ENCODE measurements at regions of chr3 and their contacts with region 1.

Region 1: DNA sequence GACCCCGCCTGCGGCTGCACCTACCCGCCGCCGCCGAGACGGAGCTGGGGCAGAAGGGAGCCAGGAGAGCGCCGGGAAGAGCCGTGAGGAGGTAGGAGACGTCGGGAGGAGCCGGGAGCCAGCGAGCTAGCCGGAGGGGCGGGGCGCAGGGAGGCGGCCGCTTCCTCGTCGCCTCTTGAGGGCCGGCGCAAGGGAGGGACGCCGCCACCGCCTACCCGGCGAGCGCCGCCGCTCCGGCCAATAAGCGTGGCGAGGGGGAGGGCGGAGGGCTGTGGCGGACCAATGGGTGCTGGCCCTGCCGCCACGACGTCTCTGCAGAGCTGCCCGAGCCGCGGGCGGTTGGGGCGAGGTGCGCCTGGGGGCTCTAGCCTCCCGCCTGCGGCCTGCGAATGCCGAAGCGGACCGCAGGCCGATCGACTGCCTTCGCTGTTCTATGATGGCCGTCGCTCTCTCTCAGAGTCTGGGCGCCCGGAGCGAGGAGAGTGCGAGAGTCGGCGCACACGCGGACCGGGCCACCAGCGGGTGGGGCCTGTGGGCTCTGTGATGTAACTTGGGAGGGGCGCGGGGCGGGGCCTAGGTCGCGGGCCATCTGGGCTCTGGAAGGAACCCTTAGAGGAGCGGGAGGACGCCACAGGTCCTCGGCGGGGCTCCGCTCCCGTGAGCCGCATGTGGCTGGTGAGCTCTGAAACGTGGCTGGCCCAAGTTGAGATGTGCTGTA is 72.7 kb upstream of the MAP4 start:
- DNase-seq: peak; percentile 96
- ATAC-seq: peak; percentile 97
- H3K4me3 Mint-ChIP-seq: peak overlapping the region; percentile 98
- H3K27ac Mint-ChIP-seq: peak overlapping the region; percentile 98
- H3K4me1 Mint-ChIP-seq: peaks cover 22% of the 10 kb centered on the region
- H3K27me3 Mint-ChIP-seq: no peaks in the 10 kb centered on the region

Region 2: DNA sequence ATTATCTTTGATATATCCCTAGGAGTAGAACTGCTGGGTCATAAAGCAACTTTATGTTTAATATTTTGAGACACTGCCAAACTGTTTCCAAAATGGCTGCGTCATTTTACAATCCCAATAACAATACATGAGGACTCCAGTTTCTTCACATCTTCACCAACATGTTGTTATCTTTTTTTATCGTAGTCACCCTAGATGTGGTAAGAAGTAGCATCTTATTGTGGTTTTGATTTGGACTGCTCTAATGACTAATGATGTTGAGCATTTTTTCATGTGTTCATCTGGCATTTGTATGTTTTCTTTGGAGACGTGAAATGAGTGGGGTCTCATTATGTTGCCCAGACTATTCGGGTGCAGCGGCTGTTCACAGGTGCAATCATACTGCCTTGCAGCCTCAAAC is 156.5 kb before region 1 on chr3:
- POLR2A ChIA-PET with region 1: no interaction called
- DNase-seq: no peak
- ATAC-seq: no peak
- H3K4me3 Mint-ChIP-seq: no peak overlapping the region
- H3K27ac Mint-ChIP-seq: no peak overlapping the region
- H3K4me1 Mint-ChIP-seq: peaks cover 2% of the 10 kb centered on the region
- H3K27me3 Mint-ChIP-seq: no peaks in the 10 kb centered on the region

Region 3: DNA sequence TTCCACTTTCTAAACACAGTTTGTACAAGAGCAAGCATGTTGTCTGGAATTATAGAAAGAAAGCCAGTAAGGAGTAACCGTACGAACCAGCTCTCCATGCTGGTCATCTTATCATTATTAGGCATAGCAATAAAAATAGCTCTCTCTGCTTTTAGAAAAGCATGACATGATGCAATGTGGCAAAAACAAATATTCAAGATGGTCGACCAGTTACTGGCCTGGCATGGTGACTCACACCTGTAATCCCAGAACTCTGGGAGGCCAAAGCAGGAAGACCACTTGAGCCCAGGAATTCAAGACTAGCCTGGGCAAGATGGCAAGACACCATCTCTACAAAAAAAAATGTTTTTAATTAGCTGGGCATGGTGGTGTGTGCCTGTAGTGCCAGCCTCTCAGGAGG is 70.1 kb before region 1 on chr3:
- POLR2A ChIA-PET with region 1: no interaction called
- DNase-seq: no peak
- ATAC-seq: no peak
- H3K4me3 Mint-ChIP-seq: no peak overlapping the region
- H3K27ac Mint-ChIP-seq: no peak overlapping the region
- H3K4me1 Mint-ChIP-seq: peaks cover 30% of the 10 kb centered on the region
- H3K27me3 Mint-ChIP-seq: no peaks in the 10 kb centered on the region

Region 4: DNA sequence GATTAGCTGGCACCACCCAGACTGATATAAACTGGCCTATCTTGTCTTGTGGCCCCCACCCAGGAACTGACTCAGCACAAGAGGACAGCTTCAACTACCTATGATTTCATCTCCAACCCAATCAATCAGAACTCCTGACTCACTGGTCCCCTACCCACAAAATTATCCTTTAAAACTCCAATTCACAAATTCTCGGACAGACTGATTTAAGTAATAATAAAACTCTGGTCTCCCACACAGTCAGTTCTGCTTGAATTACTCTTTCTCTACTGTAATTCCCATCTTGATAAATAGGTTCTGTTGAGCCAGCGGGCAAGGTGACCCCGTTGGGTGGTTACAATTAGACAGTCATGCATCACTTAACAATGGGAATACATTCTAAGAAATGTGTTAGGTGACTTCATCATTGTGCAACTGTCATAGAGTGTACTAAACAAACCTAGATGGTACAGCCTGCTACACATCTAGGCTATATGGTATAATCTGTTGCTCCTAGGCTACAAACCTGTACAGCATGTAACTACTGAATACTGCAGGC is 24.5 kb before region 1 on chr3:
- POLR2A ChIA-PET with region 1: no interaction called
- DNase-seq: no peak
- ATAC-seq: no peak
- H3K4me3 Mint-ChIP-seq: no peak overlapping the region
- H3K27ac Mint-ChIP-seq: no peak overlapping the region
- H3K4me1 Mint-ChIP-seq: peaks cover 13% of the 10 kb centered on the region
- H3K27me3 Mint-ChIP-seq: no peaks in the 10 kb centered on the region

Region 5: GRCh38 chr3:48112813-48113212 is 23.9 kb after region 1 on chr3:
- POLR2A ChIA-PET with region 1: interaction called, 50 read pairs
- DNase-seq: no peak
- ATAC-seq: no peak
- H3K4me3 Mint-ChIP-seq: peak overlapping the region; percentile 66
- H3K27ac Mint-ChIP-seq: peak overlapping the region; percentile 86
- H3K4me1 Mint-ChIP-seq: peaks cover 15% of the 10 kb centered on the region
- H3K27me3 Mint-ChIP-seq: peaks cover 4% of the 10 kb centered on the region

Region 6: GRCh38 chr3:48151058-48151806 is 62.3 kb after region 1 on chr3:
- POLR2A ChIA-PET with region 1: interaction called, 11 read pairs
- DNase-seq: peak; percentile 72
- ATAC-seq: peak; percentile 96
- H3K4me3 Mint-ChIP-seq: no peak overlapping the region
- H3K27ac Mint-ChIP-seq: no peak overlapping the region
- H3K4me1 Mint-ChIP-seq: peaks cover 3% of the 10 kb centered on the region
- H3K27me3 Mint-ChIP-seq: peaks cover 2% of the 10 kb centered on the region